ENCODE measurements at regions of chr7 and their contacts with region 1.

Region 1: DNA sequence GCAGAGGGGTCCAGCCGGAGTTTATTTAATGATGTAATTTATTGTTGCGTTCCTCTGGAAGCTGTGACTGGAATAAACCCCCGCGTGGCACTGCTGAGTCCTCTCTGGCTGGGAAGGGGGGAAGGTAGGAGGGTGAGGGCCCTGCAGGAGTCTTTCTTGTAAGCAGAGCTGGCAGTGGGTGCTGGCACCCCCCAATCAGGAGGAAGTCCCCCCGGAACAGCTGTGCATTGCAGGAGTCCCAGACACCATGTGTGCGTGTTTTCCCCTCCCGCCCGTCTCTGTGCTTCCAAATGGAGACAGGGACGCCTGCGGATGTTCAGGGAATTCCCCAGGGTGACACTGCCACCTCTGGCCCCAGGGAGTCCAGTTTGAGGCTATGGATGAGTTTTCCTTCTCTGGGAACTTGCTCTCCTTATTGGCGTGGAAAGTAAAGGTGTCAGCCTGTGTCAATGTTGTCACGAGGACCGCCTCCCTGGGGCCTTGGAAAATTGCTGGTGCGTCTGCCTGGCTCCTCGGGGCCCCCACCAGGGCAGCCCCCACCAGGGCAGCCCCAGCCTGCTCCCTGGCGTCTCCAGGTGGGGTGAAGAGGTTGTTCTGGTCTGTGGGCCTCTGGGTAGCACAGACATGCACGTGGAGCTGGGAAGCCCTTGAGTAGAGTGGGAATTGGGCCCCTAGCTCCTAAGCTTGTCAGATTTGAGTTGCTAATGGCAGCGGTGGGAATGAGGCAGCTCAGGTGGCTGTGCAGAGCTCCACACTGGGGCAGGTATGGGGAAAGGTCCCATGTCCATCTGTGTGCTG is 2.7 kb downstream of the FZD9 start:
- DNase-seq: peak; percentile 54
- ATAC-seq: peak; percentile 71
- H3K4me3 ChIP-seq: peak overlapping the region in 2 of 3 experiments; percentile 5 to 49; a peak in 1 of 6 replicates
- H3K27ac ChIP-seq: no peak overlapping the region
- H3K4me1 ChIP-seq: peaks cover 32% of the 10 kb centered on the region
- H3K27me3 ChIP-seq: peaks cover 0 to 4% of the 10 kb centered on the region in 2 experiments; a peak in 1 of 5 replicates
- CTCF ChIP-seq: peak; percentile 70
- EP300 ChIP-seq: no peak
- POLR2A ChIP-seq: no peak
- RAD21 ChIP-seq: peak; percentile 56

Region 2: GRCh38 chr7:73316521-73316920 is 119.7 kb before region 1 on chr7:
- CTCF ChIA-PET with region 1: no interaction called
- POLR2A ChIA-PET with region 1: no interaction called
- in situ Hi-C with region 1: no loop called
- intact Hi-C with region 1: loop called (anchors 5 kb)
- DNase-seq: no peak
- ATAC-seq: no peak
- H3K4me3 ChIP-seq: no peak overlapping the region
- H3K27ac ChIP-seq: no peak overlapping the region
- H3K4me1 ChIP-seq: no peaks in the 10 kb centered on the region
- H3K27me3 ChIP-seq: no peaks in the 10 kb centered on the region
- CTCF ChIP-seq: no peak
- EP300 ChIP-seq: no peak
- POLR2A ChIP-seq: no peak
- RAD21 ChIP-seq: no peak

Region 3: GRCh38 chr7:73351447-73352167 is 84.6 kb before region 1 on chr7:
- CTCF ChIA-PET with region 1: no interaction called
- POLR2A ChIA-PET with region 1: no interaction called
- in situ Hi-C with region 1: no loop called
- intact Hi-C with region 1: no loop called
- DNase-seq: no peak
- ATAC-seq: no peak
- H3K4me3 ChIP-seq: no peak overlapping the region
- H3K27ac ChIP-seq: no peak overlapping the region
- H3K4me1 ChIP-seq: peaks cover 55% of the 10 kb centered on the region
- H3K27me3 ChIP-seq: peaks cover 4 to 8% of the 10 kb centered on the region in 2 experiments; a peak in 2 of 5 replicates
- CTCF ChIP-seq: no peak
- EP300 ChIP-seq: no peak
- POLR2A ChIP-seq: no peak
- RAD21 ChIP-seq: no peak